T-cell (primary cell): ENCODE measurements at regions of chr12 and their contacts with region 1.

Region 1: DNA sequence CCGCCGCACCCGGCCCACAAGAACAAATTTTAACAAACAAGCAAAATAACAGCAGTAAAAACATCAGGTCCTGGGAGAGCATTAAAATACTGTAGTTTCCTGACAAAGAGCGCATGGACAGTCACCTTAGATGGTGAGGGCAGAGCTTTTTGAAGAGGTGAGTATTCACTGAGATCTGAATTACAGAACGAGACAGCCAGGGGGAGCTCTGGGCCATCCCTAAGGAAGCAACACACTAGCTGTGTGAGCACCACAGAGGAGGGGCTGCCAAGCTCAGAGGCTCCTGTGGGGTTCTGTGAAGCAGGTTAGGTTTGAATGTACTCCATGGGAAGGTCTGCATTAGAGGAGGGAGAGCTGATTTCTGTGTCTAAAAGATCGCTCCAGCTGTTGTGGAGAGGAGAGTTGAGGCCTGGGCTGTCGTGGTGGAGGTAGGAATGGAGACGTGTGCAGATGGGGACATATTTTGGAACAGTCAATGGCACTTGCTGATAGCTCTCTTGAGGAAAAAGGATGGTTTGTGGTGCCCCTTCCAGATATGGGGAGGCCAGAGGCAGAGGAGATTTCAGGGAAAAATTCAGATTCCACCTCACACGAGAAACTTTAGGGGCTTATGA is 72.9 kb downstream of the TRAFD1 start:
- DNase-seq: peak in 31 of 35 experiments; percentile 4 to 55 (median 29)
- ATAC-seq: peak; percentile 60 to 80 (median 73)
- H3K4me3 ChIP-seq: no peak overlapping the region
- H3K4me3 Mint-ChIP-seq: no peak overlapping the region
- H3K27ac ChIP-seq: no peak overlapping the region
- H3K27ac Mint-ChIP-seq: no peak overlapping the region
- H3K4me1 ChIP-seq: no peaks in the 10 kb centered on the region
- H3K4me1 Mint-ChIP-seq: peaks cover 0 to 6% (median 2%) of the 10 kb centered on the region in 3 donors
- H3K27me3 ChIP-seq: no peaks in the 10 kb centered on the region
- H3K27me3 Mint-ChIP-seq: no peaks in the 10 kb centered on the region

Region 2: DNA sequence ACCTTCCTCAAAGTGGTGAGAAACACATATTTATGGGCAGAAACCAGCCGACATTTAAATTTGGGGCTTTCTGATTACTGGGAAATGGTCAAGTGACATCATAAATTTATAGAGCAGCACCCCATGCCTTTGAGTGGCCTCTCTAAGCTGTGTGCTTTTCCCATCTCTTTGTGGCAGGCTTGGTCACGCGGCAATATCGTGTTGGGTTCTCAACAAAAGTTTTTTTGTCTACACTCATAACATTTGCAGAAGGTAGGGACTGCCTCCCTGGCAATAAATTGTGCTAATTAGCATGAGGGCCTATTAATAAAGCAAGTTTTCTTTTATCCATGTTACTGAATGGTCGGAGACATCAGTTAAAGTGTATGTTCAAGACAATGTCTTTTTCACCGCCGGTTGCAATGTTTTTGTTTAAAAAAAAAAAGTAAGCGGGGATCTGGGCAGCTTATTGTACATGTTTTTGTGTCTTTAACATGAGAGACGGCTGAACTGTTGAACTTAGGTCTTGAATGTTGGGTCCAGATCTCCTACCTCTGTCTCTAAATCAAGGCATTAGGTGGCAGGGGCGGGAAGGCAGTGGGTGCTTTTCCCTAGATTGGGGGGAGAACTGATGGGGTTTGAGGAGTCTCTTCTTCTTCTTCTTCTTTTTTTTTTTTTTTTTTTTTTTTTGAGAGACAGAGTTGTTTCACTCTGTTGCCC is 1022.7 kb before region 1 on chr12:
- CTCF ChIA-PET with region 1: interaction called in 1 of 2 experiments, 19 read pairs
- POLR2A ChIA-PET with region 1: no interaction called
- DNase-seq: no peak
- ATAC-seq: no peak
- H3K4me3 ChIP-seq: no peak overlapping the region
- H3K4me3 Mint-ChIP-seq: no peak overlapping the region
- H3K27ac ChIP-seq: no peak overlapping the region
- H3K27ac Mint-ChIP-seq: no peak overlapping the region
- H3K4me1 ChIP-seq: no peaks in the 10 kb centered on the region
- H3K4me1 Mint-ChIP-seq: peaks cover 0 to 4% (median 2%) of the 10 kb centered on the region in 3 donors
- H3K27me3 ChIP-seq: peaks cover 0 to 45% of the 10 kb centered on the region in 2 experiments
- H3K27me3 Mint-ChIP-seq: peaks cover 14 to 49% of the 10 kb centered on the region in 2 donors

Region 3: GRCh38 chr12:112386726-112387125 is 188.5 kb after region 1 on chr12:
- CTCF ChIA-PET with region 1: interaction called, 11 to 29 read pairs
- POLR2A ChIA-PET with region 1: no interaction called
- DNase-seq: no peak
- ATAC-seq: no peak
- H3K4me3 ChIP-seq: no peak overlapping the region
- H3K4me3 Mint-ChIP-seq: no peak overlapping the region
- H3K27ac ChIP-seq: no peak overlapping the region
- H3K27ac Mint-ChIP-seq: peak overlapping the region in 1 of 2 donors; percentile 80
- H3K4me1 ChIP-seq: peaks cover 0 to 12% of the 10 kb centered on the region in 2 experiments
- H3K4me1 Mint-ChIP-seq: peaks cover 8 to 13% (median 9%) of the 10 kb centered on the region in 3 donors
- H3K27me3 ChIP-seq: peaks cover 0 to 6% of the 10 kb centered on the region in 2 experiments
- H3K27me3 Mint-ChIP-seq: no peaks in the 10 kb centered on the region

Region 4: GRCh38 chr12:112705037-112705661 is 506.9 kb after region 1 on chr12:
- CTCF ChIA-PET with region 1: no interaction called
- POLR2A ChIA-PET with region 1: no interaction called
- DNase-seq: no peak
- ATAC-seq: no peak
- H3K4me3 ChIP-seq: no peak overlapping the region
- H3K4me3 Mint-ChIP-seq: no peak overlapping the region
- H3K27ac ChIP-seq: no peak overlapping the region
- H3K27ac Mint-ChIP-seq: no peak overlapping the region
- H3K4me1 ChIP-seq: no peaks in the 10 kb centered on the region
- H3K4me1 Mint-ChIP-seq: no peaks in the 10 kb centered on the region
- H3K27me3 ChIP-seq: peaks cover 0 to 14% of the 10 kb centered on the region in 2 experiments
- H3K27me3 Mint-ChIP-seq: peaks cover 17 to 32% of the 10 kb centered on the region in 2 donors